Activated T-helper 1 cell treated with anti-CD3 and anti-CD28 coated beads, Interleukin-12 subunit alpha, Interleukin-12 subunit beta, Interleukin-2, Interleukin-4 antibody, amounts not matched to agents 30 ng/mL and 10 ng/mL and 1 ng/mL, durations not matched to agents 14 hours and 24 hours and 36 hours (primary cell): ENCODE measurements at regions of chr9 and their contacts with region 1.

Region 1: DNA sequence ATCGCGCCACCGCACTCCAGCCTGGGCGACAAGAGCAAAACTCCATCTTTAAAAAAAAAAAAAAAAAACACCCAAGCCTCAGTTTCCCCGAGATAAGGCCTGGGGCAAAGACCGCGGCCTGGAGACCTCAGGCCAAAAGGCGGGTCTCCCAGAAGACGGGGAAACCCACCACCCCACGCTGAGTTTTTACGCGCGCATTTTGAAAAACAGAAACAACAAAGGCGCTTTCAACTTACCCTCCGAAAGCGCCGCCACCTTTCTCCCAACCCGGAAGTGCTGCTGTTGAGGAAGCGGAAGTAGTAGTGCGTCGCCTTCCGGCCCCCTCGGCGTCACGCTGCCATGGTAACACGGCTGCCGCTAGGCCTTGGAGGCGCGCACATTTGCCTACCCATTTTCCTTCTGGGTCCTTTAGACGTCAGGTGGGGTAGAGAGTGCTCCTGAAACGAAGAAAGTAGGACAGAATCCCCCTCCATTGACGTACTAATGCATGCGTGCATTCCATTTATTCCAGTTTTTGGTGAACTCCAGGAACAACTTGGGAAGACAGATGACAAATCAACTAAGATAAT is at the start of gene TTF1:
- DNase-seq: peak; percentile 91
- H3K4me3 Mint-ChIP-seq: peak within 1 kb of the TSS; percentile 87
- H3K27ac Mint-ChIP-seq: peak within 1 kb of the TSS; percentile 91
- H3K4me1 Mint-ChIP-seq: peaks cover 52% of the 10 kb centered on the region
- H3K27me3 Mint-ChIP-seq: peaks cover 16% of the 10 kb centered on the region
- total RNA-seq, gene TTF1: 33.1 and 33.3 TPM in 2 replicates

Region 2: DNA sequence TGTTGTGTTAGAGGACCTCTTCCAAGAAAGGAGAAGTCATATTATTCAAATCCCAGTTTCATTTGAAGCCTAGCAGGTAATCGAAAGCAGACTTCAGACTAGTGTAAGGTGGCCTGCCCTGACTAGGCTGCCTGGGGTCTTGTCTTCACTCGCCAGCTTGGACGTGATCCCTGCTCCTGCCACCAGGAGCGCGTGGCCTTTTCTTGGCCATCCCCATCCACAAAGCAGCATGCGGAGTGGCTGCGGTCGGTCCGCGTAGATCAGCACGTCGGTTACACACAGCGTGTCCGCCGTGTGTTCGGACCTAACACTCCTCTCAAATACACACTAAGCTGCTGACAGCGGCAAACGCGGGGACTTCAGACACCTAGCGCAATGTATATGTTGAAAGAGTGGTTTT is 40.7 kb after region 1 on chr9:
- intact Hi-C with region 1: no loop called
- DNase-seq: no peak
- H3K4me3 Mint-ChIP-seq: no peak overlapping the region
- H3K27ac Mint-ChIP-seq: no peak overlapping the region
- H3K4me1 Mint-ChIP-seq: no peaks in the 10 kb centered on the region
- H3K27me3 Mint-ChIP-seq: peaks cover 9% of the 10 kb centered on the region

Region 3: GRCh38 chr9:132486706-132487350 is 80.2 kb after region 1 on chr9:
- intact Hi-C with region 1: loop called (anchors 5 kb)
- DNase-seq: peak; percentile 44
- H3K4me3 Mint-ChIP-seq: peak overlapping the region; percentile 65
- H3K27ac Mint-ChIP-seq: peak overlapping the region; percentile 74
- H3K4me1 Mint-ChIP-seq: peaks cover 18% of the 10 kb centered on the region
- H3K27me3 Mint-ChIP-seq: peaks cover 48% of the 10 kb centered on the region

Region 4: DNA sequence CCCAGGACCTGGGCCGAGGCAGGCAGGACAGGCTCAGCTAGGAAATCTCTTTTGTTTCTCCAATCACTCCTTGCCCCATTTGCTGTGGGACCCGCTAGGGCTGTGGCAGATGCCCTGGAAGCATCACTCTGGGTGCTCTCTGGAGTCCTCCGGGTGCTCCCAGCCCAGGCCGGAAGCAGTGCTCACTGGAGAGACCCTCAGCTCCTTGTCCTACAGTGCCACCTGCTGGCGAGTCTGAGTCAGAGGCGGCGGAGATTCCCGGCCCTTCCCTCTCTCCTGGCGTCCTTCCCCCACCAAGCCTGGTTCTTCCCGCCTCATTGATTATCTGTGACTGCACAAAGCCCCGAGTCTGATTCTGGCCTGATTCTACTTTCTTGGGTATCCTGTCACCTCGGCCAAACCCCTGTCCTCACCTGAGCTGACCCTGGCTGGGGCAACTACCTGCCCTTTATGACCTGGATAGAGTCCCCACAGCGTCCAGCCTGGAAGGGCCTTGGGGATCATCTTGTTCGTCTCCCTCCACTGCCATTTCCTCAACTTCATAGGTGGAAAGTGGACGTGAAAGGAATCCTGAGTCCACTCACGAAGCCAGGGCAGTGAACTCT is 168.5 kb after region 1 on chr9:
- intact Hi-C with region 1: loop called (anchors 1 kb)
- DNase-seq: peak; percentile 25
- H3K4me3 Mint-ChIP-seq: no peak overlapping the region
- H3K27ac Mint-ChIP-seq: no peak overlapping the region
- H3K4me1 Mint-ChIP-seq: no peaks in the 10 kb centered on the region
- H3K27me3 Mint-ChIP-seq: peaks cover 51% of the 10 kb centered on the region

Region 5: GRCh38 chr9:132669698-132670456 is 263.2 kb after region 1 on chr9 and contains the start of gene DDX31:
- intact Hi-C with region 1: loop called (anchors 2 kb)
- DNase-seq: peak; percentile 84
- H3K4me3 Mint-ChIP-seq: peak within 1 kb of the TSS; percentile 96
- H3K27ac Mint-ChIP-seq: peak within 1 kb of the TSS; percentile 90
- H3K4me1 Mint-ChIP-seq: peaks cover 38% of the 10 kb centered on the region
- H3K27me3 Mint-ChIP-seq: no peaks in the 10 kb centered on the region
- total RNA-seq, gene DDX31: 32.1 and 34.1 TPM in 2 replicates

Region 6: DNA sequence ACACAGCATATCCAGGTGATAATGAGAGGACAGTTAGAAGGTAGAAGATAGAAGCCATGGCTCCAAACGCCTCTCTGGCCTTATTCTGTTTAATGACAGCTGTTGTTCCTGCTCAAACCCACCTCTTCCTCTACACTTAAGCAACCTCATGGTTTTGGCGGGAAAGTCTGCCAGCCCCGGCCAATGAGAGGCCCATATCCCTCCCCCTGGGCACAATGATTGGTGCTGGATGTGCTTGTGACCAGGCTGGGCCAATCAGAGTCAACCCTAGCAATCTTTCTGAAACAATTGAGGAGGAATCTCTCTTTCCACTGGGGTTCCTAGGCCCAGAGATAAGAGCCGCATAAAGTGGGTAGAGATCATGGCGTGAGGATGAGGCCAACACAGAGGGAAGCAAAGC is 567.1 kb after region 1 on chr9:
- intact Hi-C with region 1: loop called (anchors 2 kb)
- DNase-seq: no peak
- H3K4me3 Mint-ChIP-seq: no peak overlapping the region
- H3K27ac Mint-ChIP-seq: no peak overlapping the region
- H3K4me1 Mint-ChIP-seq: peaks cover 4% of the 10 kb centered on the region
- H3K27me3 Mint-ChIP-seq: peaks cover 20% of the 10 kb centered on the region

Region 7: GRCh38 chr9:134163353-134164196 is 1756.9 kb after region 1 on chr9:
- intact Hi-C with region 1: loop called (anchors 5 kb)
- DNase-seq: peak; percentile 61
- H3K4me3 Mint-ChIP-seq: no peak overlapping the region
- H3K27ac Mint-ChIP-seq: no peak overlapping the region
- H3K4me1 Mint-ChIP-seq: peaks cover 10% of the 10 kb centered on the region
- H3K27me3 Mint-ChIP-seq: no peaks in the 10 kb centered on the region